ENCODE measurements at regions of chr3 and their contacts with region 1.

Region 1: GRCh38 chr3:124552239-124552638 is 178.0 kb upstream of the UMPS start:
- DNase-seq: peak; percentile 26
- H3K27ac ChIP-seq: no peak overlapping the region
- CTCF ChIP-seq: no peak

Region 2: DNA sequence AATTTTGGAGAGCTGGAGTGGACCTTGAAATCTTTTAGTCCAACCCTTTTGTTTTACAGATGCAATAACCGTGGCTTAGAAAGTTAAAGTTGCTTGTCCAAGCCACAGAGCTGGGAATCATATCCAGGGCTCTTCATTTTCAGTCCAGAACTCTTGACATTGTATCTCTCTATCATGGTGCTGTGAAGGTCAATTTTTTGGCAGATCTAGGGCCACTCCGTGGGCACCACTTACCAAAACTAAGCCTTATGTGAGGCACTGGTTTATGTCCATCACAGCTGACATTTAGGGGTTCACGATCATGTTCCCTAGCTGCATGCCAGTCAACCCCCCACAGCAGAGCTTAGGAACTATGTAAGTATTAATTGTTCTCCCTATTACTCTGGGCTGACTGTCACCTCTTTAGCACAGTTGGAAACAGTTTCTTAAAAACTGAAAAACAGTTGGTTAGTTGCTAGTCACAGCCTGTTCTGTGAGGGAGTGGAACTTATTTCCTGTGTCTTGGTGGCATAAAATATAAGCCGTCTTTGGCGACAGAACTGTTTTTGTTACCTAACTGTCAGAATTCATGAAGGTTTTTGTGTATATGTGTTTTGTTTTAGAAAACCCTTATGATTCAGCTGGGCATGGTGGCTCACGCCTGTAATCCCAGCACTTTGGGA is 11.6 kb before region 1 on chr3:
- CTCF ChIA-PET with region 1: interaction called, 17 read pairs
- POLR2A ChIA-PET with region 1: no interaction called
- DNase-seq: no peak
- H3K27ac ChIP-seq: no peak overlapping the region
- CTCF ChIP-seq: no peak